BJ (cell line): ENCODE measurements at regions of chr1 and their contacts with region 1.

Region 1: DNA sequence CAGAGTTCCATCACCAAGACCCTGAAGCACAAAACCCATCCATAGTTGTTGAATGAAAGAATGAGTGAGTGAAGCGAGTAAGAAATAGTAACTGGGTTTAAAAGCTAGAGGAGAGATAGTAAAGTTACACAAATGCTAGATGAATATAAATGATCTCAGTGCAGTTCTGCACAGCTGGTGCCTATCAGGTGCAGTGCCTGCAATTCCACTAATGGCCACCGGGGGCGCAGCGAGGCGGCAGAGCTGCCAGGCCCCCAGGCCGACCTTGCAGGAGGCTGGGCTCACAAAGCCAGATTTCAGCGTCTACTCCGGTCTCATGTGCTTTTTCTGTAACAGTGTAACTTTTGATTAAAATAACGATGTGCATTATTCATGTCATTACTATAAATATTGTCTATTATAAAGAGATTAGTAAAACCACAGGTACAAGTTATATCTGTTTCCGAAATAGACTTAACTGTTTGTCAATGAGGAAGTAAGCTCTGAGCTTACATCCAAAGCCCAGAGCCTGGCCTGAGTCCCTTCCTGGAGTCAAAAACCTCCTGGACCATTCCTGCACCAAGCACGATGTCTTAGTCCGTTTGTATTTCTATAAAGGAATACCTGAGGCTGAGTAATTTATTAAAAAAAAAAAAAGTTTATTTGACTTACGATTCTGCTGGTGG is 477.6 kb downstream of the NPHP4 start:
- DNase-seq: no peak
- H3K4me3 ChIP-seq: no peak overlapping the region
- H3K27me3 ChIP-seq: no peaks in the 10 kb centered on the region
- CTCF ChIP-seq: peak; percentile 98

Region 2: GRCh38 chr1:5456090-5456811 is 58.4 kb before region 1 on chr1:
- CTCF ChIA-PET with region 1: no interaction called
- POLR2A ChIA-PET with region 1: no interaction called
- DNase-seq: no peak
- H3K4me3 ChIP-seq: no peak overlapping the region
- H3K27me3 ChIP-seq: no peaks in the 10 kb centered on the region
- CTCF ChIP-seq: no peak

Region 3: DNA sequence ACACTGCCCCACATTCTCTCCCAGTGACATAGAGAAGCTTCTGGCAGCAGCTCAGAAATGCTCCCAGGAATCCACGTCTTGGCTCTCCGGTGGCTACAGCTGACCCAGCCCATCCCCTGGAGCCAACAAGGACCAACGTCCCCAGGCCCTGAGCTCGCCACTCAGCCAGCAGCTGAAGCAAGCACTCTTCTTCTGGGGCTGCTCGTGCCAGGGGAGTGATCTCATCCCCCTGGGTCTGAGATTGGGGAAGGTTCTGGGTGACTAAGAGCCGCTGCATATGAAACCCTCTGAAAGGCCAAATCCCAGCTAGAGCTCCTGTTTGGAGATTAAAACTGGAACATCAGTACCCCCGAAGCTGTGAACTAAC is 10.3 kb before region 1 on chr1:
- CTCF ChIA-PET with region 1: interaction called, 21 read pairs
- POLR2A ChIA-PET with region 1: no interaction called
- DNase-seq: no peak
- H3K4me3 ChIP-seq: no peak overlapping the region
- H3K27me3 ChIP-seq: no peaks in the 10 kb centered on the region
- CTCF ChIP-seq: no peak

Region 4: GRCh38 chr1:5975133-5975880 is 460.7 kb after region 1 on chr1:
- CTCF ChIA-PET with region 1: interaction called, 44 read pairs
- POLR2A ChIA-PET with region 1: no interaction called
- DNase-seq: no peak
- H3K4me3 ChIP-seq: no peak overlapping the region
- H3K27me3 ChIP-seq: no peaks in the 10 kb centered on the region
- CTCF ChIP-seq: peak; percentile 89